Panc1 (cell line): ENCODE measurements at regions of chr20 and their contacts with region 1.

Region 1: GRCh38 chr20:38073307-38074071 is 39.9 kb downstream of the RPRD1B start:
- DNase-seq: peak; percentile 55
- ATAC-seq: peak; percentile 85
- H3K4me3 ChIP-seq: no peak overlapping the region
- H3K27ac ChIP-seq: peak overlapping the region; percentile 70
- H3K4me1 ChIP-seq: peaks cover 21% of the 10 kb centered on the region; the same call in 1 of the 2 replicates
- H3K27me3 ChIP-seq: no peaks in the 10 kb centered on the region
- CTCF ChIP-seq: peak; percentile 84

Region 2: DNA sequence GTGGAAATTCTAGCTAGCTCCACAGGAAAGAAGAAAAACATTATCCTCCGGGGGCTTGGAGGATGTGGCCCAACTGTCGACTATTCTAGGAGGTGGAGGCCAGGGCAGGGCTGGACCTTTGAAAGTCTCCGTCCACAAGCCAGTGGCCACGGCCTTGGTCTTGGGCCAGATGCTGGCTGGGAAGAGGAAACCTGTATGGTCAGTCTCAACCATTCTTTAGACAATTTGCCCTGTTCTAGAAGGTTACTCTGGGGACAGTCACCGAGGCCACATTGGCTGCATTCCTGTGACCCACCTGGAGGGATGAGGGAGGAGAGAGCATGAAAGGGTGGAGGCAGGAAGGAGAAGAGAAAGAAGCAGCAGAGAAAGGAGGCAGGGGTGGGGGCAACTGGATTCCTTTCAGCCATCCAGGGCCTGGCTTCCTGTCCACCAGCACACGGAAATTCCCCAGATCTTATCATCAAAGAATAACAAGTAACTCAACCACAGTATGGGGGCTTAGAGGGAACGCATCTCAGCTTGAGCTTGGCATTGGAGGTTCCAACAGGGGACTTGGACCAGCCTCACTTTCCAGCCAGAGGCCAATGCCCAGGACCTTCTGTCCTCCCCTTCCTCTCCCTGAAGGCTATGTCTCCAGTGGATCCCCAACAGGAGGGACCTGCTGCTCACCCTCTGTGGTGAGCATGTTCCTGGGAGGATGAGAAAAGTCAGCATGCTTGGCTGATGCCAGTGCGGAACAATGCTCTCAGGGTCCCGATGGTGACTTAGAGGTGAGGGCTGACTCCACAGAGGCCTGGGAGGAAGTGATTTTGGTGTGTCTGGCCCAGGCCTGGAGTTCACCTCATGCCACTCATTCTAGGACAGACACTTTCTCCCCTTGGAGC is 61.1 kb after region 1 on chr20:
- CTCF ChIA-PET with region 1: no interaction called
- POLR2A ChIA-PET with region 1: no interaction called
- in situ Hi-C with region 1: no loop called
- intact Hi-C with region 1: no loop called
- DNase-seq: no peak
- ATAC-seq: peak; percentile 66
- H3K4me3 ChIP-seq: no peak overlapping the region
- H3K27ac ChIP-seq: peak overlapping the region; percentile 83
- H3K4me1 ChIP-seq: peaks cover 35% of the 10 kb centered on the region
- H3K27me3 ChIP-seq: no peaks in the 10 kb centered on the region
- CTCF ChIP-seq: no peak

Region 3: GRCh38 chr20:38165089-38165989 is 91.8 kb after region 1 on chr20 and contains the start of gene TGM2:
- CTCF ChIA-PET with region 1: interaction called, 7 read pairs
- POLR2A ChIA-PET with region 1: no interaction called
- in situ Hi-C with region 1: no loop called
- intact Hi-C with region 1: loop called (anchors 5 kb)
- DNase-seq: peak; percentile 52
- ATAC-seq: peak; percentile 94
- H3K4me3 ChIP-seq: peak within 1 kb of the TSS; percentile 48 to 78
- H3K27ac ChIP-seq: peak within 1 kb of the TSS; percentile 48; the same call in 1 of the 2 replicates
- H3K4me1 ChIP-seq: peaks cover 14% of the 10 kb centered on the region
- H3K27me3 ChIP-seq: no peaks in the 10 kb centered on the region
- CTCF ChIP-seq: peak; percentile 96
- total RNA-seq, gene TGM2: 113 TPM

Region 4: DNA sequence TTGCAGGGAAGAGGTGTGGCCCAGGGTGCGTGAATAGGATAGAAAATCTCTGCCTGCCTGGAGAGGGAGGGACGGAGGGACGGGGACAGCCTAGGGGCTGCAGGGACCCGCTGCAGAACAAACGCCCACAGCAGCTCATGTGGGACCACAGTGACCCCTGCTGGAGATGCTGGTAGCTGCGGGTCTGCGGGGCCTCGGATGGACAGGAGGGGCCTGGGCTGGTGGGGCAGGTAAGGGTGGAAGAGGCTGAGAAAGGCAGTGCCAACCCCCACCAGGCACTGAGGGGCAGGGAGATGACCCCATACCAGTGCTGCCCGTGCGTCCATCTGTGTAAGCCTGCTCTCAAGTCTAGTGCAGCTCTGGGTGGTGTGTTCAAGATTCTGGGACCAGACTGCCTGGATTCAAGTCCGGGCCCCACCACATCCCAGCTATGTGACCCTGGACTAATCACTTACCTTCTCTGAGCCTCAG is 147.7 kb after region 1 on chr20:
- CTCF ChIA-PET with region 1: interaction called, 11 read pairs
- POLR2A ChIA-PET with region 1: no interaction called
- in situ Hi-C with region 1: no loop called
- intact Hi-C with region 1: loop called (anchors 5 kb)
- DNase-seq: no peak
- ATAC-seq: peak; percentile 79
- H3K4me3 ChIP-seq: peak overlapping the region in 1 of 2 experiments; percentile 23; a peak in 2 of 4 replicates
- H3K27ac ChIP-seq: no peak overlapping the region
- H3K4me1 ChIP-seq: peaks cover 12% of the 10 kb centered on the region
- H3K27me3 ChIP-seq: no peaks in the 10 kb centered on the region
- CTCF ChIP-seq: peak; percentile 96